ENCODE measurements at regions of chr6 and their contacts with region 1.

Region 1: GRCh38 chr6:111087106-111087835 is at the start of gene SLC16A10:
- DNase-seq: peak; percentile 82
- total RNA-seq, gene SLC16A10: 5.0 TPM

Region 2: DNA sequence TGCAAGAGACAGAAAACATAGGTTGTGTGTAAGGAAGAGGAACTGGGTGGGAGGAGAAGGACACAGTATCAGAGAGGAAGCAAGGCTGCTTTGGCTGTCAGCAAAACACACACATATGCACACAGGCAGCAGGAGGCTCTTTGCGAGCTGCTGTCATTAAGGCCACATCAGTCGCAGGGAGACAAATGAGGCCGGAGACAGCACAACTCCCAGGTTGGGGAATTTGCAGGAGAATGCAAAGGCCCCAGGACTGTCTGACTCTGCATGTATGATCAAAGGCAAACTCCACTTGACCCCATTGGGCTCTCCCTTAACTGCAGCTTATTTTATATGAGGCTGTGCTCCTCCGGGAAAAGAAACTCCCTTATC is 764.4 kb before region 1 on chr6:
- intact Hi-C with region 1: no loop called
- DNase-seq: no peak

Region 3: GRCh38 chr6:110756817-110757216 is 330.5 kb before region 1 on chr6:
- intact Hi-C with region 1: no loop called
- DNase-seq: no peak

Region 4: GRCh38 chr6:111030008-111031007 is 57.0 kb before region 1 on chr6:
- intact Hi-C with region 1: loop called (anchors 5 kb)
- DNase-seq: no peak

Region 5: DNA sequence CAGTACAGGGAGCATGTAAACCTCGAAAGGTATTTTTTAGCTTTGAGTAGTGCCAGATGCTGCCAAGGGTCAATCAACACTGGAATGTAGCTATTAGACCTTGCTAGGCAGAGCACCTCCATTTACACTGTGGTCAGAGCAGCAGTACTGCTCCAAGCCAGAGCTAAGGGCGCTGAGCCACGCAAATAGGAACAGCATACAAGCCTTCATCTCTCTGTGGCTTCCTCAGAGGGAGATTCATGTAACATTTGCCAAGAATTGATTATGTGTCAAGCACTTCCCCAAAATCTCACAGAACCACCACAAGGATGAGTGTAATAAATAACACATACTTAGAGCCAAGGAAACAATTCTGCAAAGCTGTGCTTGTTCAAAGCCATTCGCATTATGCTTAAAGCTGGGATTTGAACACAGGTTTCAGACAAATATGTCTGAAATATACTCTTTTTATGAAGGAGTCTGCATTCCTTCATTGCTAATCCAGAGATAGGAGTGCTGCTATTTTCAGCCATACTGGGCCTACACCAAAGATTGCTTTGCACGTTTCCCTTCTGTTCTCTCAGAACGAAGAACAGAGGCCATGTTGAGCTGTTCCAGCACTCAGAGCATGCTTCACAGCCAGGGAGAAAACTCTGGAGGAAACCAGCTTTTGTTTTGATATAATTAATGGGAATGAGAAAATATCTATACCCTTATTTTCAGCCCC is 97.7 kb after region 1 on chr6:
- intact Hi-C with region 1: loop called (anchors 5 kb)
- DNase-seq: no peak

Measured in cardiac septum (tissue), 1 donor.